Aorta (tissue), 5 donors: ENCODE measurements at regions of chr13 and their contacts with region 1.

Region 1: GRCh38 chr13:76886292-76887075 is at the start of gene KCTD12:
- DNase-seq: peak; percentile 94 to 96
- ATAC-seq: peak; percentile 93
- H3K4me3 ChIP-seq: peak within 1 kb of the TSS; percentile 58 to 60
- H3K27ac ChIP-seq: peak within 1 kb of the TSS; percentile 59 to 89
- H3K4me1 ChIP-seq: no peaks in the 10 kb centered on the region
- H3K27me3 ChIP-seq: no peaks in the 10 kb centered on the region
- total RNA-seq, gene KCTD12: 98.7 to 137 TPM

Region 2: DNA sequence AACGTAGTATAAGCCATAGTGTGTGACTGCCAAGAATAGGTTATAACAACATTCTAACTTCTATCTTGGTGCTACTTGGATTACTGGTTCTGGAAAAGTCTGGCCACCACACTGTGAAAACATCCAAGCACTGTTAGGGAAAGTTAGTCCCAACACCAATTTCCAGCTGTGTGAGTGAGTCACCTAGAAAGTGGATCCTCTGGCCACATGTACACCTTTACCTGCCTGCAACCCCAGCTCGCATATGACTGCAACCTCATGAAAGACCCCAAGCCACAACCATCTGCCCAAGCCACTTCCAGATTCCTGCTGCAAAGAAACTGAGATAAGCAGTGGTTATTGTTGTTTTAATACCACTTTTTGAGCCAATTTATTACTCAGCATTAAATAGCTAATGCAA is 404.7 kb before region 1 on chr13:
- intact Hi-C with region 1: loop called in 1 of 2 experiments (anchors 5 kb)
- DNase-seq: no peak
- ATAC-seq: no peak
- H3K4me3 ChIP-seq: no peak overlapping the region
- H3K27ac ChIP-seq: no peak overlapping the region
- H3K4me1 ChIP-seq: no peaks in the 10 kb centered on the region
- H3K27me3 ChIP-seq: no peaks in the 10 kb centered on the region

Region 3: DNA sequence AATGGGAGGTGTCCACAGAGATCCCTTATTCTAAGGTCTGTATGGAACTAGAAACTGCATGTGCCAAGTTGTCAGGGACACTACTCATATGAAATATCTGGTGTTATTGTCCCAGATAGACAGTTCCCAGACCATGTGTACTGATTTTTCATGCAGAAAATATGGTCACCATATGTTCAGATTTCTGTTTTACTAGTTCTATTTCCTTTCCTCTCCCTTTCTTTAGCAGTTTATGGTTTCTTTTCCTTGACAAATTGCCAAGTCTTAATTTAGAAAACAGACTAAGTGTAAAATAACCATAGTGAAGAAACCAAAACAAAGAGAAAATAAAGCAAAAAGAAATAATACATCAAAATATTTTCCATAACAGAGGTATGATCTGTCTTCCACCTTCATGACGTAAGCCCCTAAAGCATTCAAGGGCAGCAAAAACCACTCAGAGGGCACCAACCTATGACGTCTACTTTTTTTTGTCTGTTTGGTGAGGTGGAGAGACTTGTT is 248.8 kb before region 1 on chr13:
- intact Hi-C with region 1: loop called in 1 of 2 experiments (anchors 10 kb)
- DNase-seq: no peak
- ATAC-seq: no peak
- H3K4me3 ChIP-seq: no peak overlapping the region
- H3K27ac ChIP-seq: peak overlapping the region; percentile 42 to 43
- H3K4me1 ChIP-seq: peaks cover 0 to 2% of the 10 kb centered on the region in 2 donors
- H3K27me3 ChIP-seq: no peaks in the 10 kb centered on the region

Region 4: DNA sequence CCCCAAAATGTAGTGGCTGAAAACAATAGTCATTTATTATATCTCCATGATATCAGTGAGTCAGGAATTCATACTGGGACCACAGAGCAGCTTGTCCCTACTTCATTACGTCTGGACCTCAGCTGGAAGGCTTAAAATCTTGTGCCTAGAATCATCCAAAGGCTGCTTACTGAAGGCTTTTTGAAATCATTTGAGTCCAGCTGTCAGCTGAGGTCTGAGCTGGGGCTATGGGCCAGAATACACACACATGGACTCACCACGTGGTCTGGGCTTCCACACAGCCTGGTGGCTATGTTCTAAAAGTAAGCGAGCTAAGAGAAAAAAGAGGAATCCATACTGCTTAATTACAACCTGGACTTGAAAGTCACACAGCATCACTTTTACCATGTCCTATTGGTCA is 209.4 kb before region 1 on chr13:
- intact Hi-C with region 1: loop called in 1 of 2 experiments (anchors 10 kb)
- DNase-seq: peak; percentile 72 to 75
- ATAC-seq: peak; percentile 83
- H3K4me3 ChIP-seq: no peak overlapping the region
- H3K27ac ChIP-seq: no peak overlapping the region
- H3K4me1 ChIP-seq: peaks cover 0 to 3% of the 10 kb centered on the region in 2 donors
- H3K27me3 ChIP-seq: no peaks in the 10 kb centered on the region

Region 5: GRCh38 chr13:76828316-76828741 is 58.2 kb before region 1 on chr13:
- intact Hi-C with region 1: loop called in 1 of 2 experiments (anchors 5 kb)
- DNase-seq: no peak
- ATAC-seq: no peak
- H3K4me3 ChIP-seq: no peak overlapping the region
- H3K27ac ChIP-seq: no peak overlapping the region
- H3K4me1 ChIP-seq: no peaks in the 10 kb centered on the region
- H3K27me3 ChIP-seq: no peaks in the 10 kb centered on the region

Region 6: GRCh38 chr13:76848596-76848995 is 37.9 kb before region 1 on chr13:
- intact Hi-C with region 1: loop called in 1 of 2 experiments (anchors 5 kb)
- DNase-seq: peak in 1 of 2 donors; percentile 60
- ATAC-seq: no peak
- H3K4me3 ChIP-seq: no peak overlapping the region
- H3K27ac ChIP-seq: no peak overlapping the region
- H3K4me1 ChIP-seq: no peaks in the 10 kb centered on the region
- H3K27me3 ChIP-seq: no peaks in the 10 kb centered on the region